Tibial artery (tissue), 4 donors: ENCODE measurements at regions of chr18 and their contacts with region 1.

Region 1: GRCh38 chr18:5295981-5296705 is 617 bp upstream of the ZBTB14 start:
- DNase-seq: peak; percentile 93 to 98
- H3K4me3 ChIP-seq: peak overlapping the region; percentile 72 to 99
- H3K27ac ChIP-seq: peak overlapping the region; percentile 95 to 99
- H3K4me1 ChIP-seq: peaks cover 0 to 21% (median 8%) of the 10 kb centered on the region in 4 donors
- H3K27me3 ChIP-seq: no peaks in the 10 kb centered on the region
- CTCF ChIP-seq: no peak

Region 2: GRCh38 chr18:5237723-5238370 is 58.3 kb before region 1 on chr18:
- intact Hi-C with region 1: loop called (anchors 2 kb)
- DNase-seq: peak; percentile 83 to 92
- H3K4me3 ChIP-seq: peak overlapping the region; percentile 86 to 89
- H3K27ac ChIP-seq: peak overlapping the region; percentile 95 to 99
- H3K4me1 ChIP-seq: peaks cover 0 to 33% (median 16%) of the 10 kb centered on the region in 4 donors
- H3K27me3 ChIP-seq: no peaks in the 10 kb centered on the region
- CTCF ChIP-seq: peak; percentile 20 to 42